ENCODE measurements at regions of chr5 and their contacts with region 1.

Region 1: DNA sequence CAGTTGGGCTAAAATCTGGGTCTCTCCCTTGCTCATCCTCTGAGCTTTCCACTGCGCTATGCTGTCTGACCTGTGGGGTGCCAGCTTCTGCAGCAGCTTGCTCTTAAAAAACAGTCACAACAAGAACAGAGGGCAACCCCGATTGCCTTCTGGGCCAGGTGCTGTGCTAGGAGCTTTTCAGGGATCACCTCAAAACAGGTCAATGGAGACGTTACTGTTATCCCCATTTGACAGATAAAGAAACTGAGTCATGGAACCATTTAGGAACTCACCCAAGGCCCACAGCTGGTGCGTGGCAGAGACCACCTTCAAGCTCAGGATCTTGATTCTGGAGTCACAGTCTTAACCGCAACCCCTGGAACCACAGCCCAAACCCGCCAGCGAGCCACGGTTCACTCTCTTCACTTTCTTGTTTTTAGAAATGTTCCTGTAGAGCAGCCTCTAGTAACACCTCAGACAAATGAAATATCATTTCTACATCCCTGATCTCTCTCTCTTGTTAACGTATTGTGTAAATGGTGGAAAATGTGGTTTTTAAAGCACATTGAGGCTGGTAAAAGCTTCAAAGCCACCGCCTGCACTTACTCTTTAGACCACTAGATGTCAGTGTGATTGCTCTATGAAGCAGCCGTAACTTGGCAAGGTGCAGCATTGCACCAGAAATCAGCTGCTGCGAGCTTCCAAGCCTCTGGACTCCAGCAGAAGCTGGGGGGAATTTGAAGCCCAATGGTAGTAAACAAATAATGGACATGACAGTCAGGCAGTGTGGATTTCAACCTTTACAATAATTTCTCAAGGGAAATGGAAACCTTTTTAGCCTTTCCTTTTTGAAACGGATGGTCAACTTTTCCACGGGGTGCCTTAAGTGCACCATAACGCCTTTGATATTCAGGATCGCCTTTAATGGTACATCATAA is 1.7 kb downstream of the FYB1 start:
- DNase-seq: peak; percentile 78 to 87 (median 80)
- ATAC-seq: peak; percentile 88
- H3K4me3 ChIP-seq: no peak overlapping the region
- H3K27ac ChIP-seq: no peak overlapping the region
- H3K4me1 ChIP-seq: peaks cover 0 to 17% of the 10 kb centered on the region in 2 experiments; a peak in 4 of 5 replicates
- H3K27me3 ChIP-seq: no peaks in the 10 kb centered on the region
- CTCF ChIP-seq: peak; percentile 91 to 98 (median 97)
- EP300 ChIP-seq: no peak
- POLR2A ChIP-seq: no peak
- RAD21 ChIP-seq: peak; percentile 96 to 97

Region 2: DNA sequence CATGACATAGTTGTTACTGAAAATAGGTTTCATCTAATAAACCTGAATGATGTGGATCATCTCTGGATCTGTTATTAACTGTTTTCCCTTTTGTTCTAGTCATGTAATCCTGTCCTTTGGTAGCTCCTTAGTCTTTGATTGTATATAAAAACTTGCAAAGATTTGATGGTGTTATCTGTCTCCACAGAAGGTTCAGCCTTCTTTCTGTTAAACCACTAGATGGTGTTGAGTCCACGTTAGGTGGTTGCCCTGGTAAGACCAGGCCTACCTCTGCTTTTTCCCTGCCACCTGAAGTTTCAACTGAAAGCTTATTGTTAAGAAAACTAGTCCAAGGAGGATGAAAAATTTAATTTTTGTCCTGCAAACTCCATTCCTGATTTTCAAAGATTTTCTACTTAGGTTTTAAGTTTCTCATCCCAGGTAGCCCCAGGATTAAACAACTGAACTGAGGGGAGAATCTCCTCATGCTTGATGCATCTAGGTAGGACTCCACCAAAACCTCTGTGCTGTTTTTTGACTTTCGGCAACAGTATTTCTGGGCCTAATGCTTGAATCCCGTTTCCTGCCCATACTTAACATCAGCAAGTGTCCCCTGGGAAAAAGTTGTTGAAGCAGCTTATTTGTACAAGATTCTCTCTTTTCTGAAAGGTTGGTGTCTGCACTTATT is 211.9 kb before region 1 on chr5:
- CTCF ChIA-PET with region 1: no interaction called
- POLR2A ChIA-PET with region 1: no interaction called
- in situ Hi-C with region 1: no loop called
- intact Hi-C with region 1: loop called (anchors 5 kb)
- DNase-seq: peak in 2 of 4 experiments; percentile 44 to 66
- ATAC-seq: peak; percentile 92
- H3K4me3 ChIP-seq: no peak overlapping the region
- H3K27ac ChIP-seq: peak overlapping the region; percentile 27; the same call in 1 of the 3 replicates
- H3K4me1 ChIP-seq: peaks cover 0 to 7% of the 10 kb centered on the region in 2 experiments; a peak in 2 of 5 replicates
- H3K27me3 ChIP-seq: no peaks in the 10 kb centered on the region
- CTCF ChIP-seq: peak; percentile 51 to 71 (median 70)
- EP300 ChIP-seq: no peak
- POLR2A ChIP-seq: no peak
- RAD21 ChIP-seq: peak; percentile 67 to 85

Region 3: DNA sequence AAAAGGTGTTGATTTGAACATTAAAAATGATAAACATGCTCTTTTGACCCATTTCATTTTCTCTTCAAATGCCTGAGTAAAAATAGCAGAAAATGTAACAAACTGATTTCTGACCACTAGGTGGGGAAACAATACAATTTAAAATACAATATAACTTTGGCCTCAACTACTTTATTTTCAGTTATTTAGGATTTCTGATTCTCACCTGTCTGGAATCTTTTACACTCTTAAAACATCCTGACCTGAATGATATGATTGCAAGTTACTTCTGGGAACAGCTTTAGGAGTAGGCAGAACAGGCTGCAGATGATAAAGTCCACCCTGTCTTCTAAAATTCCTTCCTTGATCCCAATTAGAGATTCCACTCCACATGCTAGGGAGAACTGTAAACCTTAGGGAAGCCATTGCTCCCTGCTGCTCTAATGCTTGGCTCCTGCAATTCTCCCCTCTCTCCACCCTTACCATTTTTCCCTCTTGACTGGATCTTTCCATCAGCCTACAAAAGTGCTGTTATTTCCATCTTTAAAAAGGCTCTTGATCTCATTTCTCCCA is 68.6 kb before region 1 on chr5:
- CTCF ChIA-PET with region 1: interaction called, 4 read pairs
- POLR2A ChIA-PET with region 1: interaction called, 3 read pairs
- in situ Hi-C with region 1: no loop called
- intact Hi-C with region 1: loop called (anchors 1 kb)
- DNase-seq: peak in 1 of 4 experiments; percentile 53
- ATAC-seq: peak; percentile 68
- H3K4me3 ChIP-seq: no peak overlapping the region
- H3K27ac ChIP-seq: no peak overlapping the region
- H3K4me1 ChIP-seq: peaks cover 0 to 9% of the 10 kb centered on the region in 2 experiments; a peak in 3 of 5 replicates
- H3K27me3 ChIP-seq: no peaks in the 10 kb centered on the region
- CTCF ChIP-seq: peak; percentile 41 to 74 (median 45); a peak in 4 of 6 replicates
- EP300 ChIP-seq: no peak
- POLR2A ChIP-seq: no peak
- RAD21 ChIP-seq: peak; percentile 81 to 94

Region 4: DNA sequence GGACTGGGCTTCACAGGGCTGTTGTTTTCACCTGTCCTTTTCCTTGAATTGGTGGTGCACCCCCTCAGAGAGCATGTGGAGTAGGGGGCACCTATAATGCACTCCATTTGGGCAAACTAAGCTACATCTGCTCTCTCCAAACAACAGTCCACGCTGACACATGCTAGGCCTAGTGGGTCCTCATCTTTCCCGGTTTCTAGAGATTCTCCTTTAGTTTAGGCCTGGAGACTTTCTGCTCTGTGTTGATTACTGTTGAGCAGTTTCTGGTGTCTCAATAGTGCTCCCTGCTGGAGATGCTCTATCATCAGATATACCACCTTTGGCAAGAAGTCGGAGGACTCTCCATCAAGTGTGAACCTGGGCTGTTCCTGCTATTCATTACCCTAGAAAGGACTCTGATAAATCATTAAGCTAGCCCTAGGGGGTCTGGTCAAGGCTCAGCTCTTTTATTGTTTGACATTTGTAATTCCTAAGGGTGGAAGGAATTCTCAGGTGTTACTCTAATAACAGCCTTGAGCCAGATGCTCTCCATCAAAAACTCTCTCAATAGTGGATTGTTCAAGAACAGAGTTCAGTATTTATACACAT is 65.7 kb after region 1 on chr5:
- CTCF ChIA-PET with region 1: interaction called, 26 read pairs
- POLR2A ChIA-PET with region 1: no interaction called
- in situ Hi-C with region 1: no loop called
- intact Hi-C with region 1: loop called (anchors 1 kb)
- DNase-seq: peak; percentile 33 to 84 (median 57)
- ATAC-seq: peak; percentile 100
- H3K4me3 ChIP-seq: no peak overlapping the region
- H3K27ac ChIP-seq: no peak overlapping the region
- H3K4me1 ChIP-seq: no peaks in the 10 kb centered on the region; a peak in 1 of 5 replicates
- H3K27me3 ChIP-seq: no peaks in the 10 kb centered on the region
- CTCF ChIP-seq: peak; percentile 78 to 94 (median 80)
- EP300 ChIP-seq: 0 out of 2 replicates have a peak, but pooled peaks have one; percentile 26
- POLR2A ChIP-seq: no peak
- RAD21 ChIP-seq: peak; percentile 98 to 99

Region 5: GRCh38 chr5:39547553-39548154 is 330.0 kb after region 1 on chr5:
- CTCF ChIA-PET with region 1: no interaction called
- POLR2A ChIA-PET with region 1: no interaction called
- in situ Hi-C with region 1: loop called (anchors 10 kb)
- intact Hi-C with region 1: loop called (anchors 5 kb)
- DNase-seq: peak; percentile 32 to 63 (median 46)
- ATAC-seq: peak; percentile 83
- H3K4me3 ChIP-seq: no peak overlapping the region
- H3K27ac ChIP-seq: no peak overlapping the region
- H3K4me1 ChIP-seq: peaks cover 0 to 8% of the 10 kb centered on the region in 2 experiments; a peak in 2 of 5 replicates
- H3K27me3 ChIP-seq: peaks cover 3 to 4% of the 10 kb centered on the region in 2 experiments; a peak in 2 of 5 replicates
- CTCF ChIP-seq: peak; percentile 61 to 90 (median 77); a peak in 5 of 6 replicates
- EP300 ChIP-seq: no peak
- POLR2A ChIP-seq: no peak
- RAD21 ChIP-seq: peak; percentile 97

Region 6: GRCh38 chr5:39570403-39571027 is 352.9 kb after region 1 on chr5:
- CTCF ChIA-PET with region 1: no interaction called
- POLR2A ChIA-PET with region 1: no interaction called
- in situ Hi-C with region 1: no loop called
- intact Hi-C with region 1: loop called (anchors 10 kb)
- DNase-seq: peak; percentile 20 to 43 (median 24)
- ATAC-seq: 0 out of 3 replicates have a peak, but pooled peaks have one; percentile 45
- H3K4me3 ChIP-seq: no peak overlapping the region
- H3K27ac ChIP-seq: no peak overlapping the region
- H3K4me1 ChIP-seq: no peaks in the 10 kb centered on the region
- H3K27me3 ChIP-seq: no peaks in the 10 kb centered on the region
- CTCF ChIP-seq: peak; percentile 39 to 70 (median 55); a peak in 4 of 6 replicates
- EP300 ChIP-seq: no peak
- POLR2A ChIP-seq: no peak
- RAD21 ChIP-seq: peak; percentile 76 to 81